ENCODE measurements at regions of chr17 and their contacts with region 1.

Region 1: DNA sequence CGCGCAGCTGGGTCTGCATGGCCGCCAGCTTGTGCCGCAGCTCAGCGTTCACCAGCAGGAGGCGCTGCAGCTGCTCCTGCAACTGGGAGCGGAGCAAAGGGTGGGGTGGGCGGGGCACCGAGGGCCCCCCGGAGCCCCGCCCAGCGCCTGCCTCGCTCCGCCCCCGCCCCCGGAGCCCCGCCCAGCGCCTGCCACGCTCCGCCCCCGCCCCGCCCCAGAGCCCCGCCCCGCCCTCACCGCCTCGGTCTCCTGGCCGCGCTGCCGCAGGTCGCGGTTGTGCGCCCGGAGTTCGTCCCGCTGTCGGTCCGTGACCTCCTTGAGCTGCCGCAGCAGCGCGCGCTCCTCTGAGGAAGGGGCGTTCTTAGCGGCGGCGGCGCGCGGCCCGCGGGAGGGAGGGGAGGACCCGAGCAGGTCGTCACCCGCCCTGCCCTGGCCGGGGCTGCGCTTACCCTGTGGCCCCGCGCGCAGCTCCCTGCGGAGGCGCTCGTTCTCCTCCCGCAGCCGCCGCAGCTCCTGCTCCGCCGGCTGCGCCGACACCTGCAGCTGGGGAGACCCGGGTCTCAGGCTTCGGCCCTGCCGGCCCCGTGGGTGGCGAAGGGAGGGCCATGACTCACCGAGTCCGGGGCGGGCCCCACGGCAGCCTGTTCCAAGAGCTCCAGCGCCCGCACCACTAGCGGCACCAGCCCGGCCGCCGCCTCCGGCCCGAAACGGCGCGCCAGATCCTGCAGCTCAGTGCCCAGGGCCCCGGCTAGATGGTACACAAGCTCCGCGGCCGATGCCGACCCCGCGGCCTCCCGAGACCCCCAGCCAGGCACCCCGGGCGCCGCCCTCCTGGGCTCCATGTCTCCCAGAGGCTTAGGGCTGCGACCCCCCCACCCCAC is 463 bp downstream of the RILP start:
- DNase-seq: peak; percentile 58
- ATAC-seq: peak; percentile 70
- H3K4me3 ChIP-seq: peak overlapping the region; percentile 64; the same call in 1 of the 2 replicates
- H3K27ac ChIP-seq: peak overlapping the region; percentile 18
- H3K4me1 ChIP-seq: peaks cover 31% of the 10 kb centered on the region
- H3K27me3 ChIP-seq: no peaks in the 10 kb centered on the region
- CTCF ChIP-seq: peak; percentile 78 to 99 (median 97)
- EP300 ChIP-seq: no peak
- POLR2A ChIP-seq: peak; percentile 73
- RAD21 ChIP-seq: peak; percentile 57

Region 2: DNA sequence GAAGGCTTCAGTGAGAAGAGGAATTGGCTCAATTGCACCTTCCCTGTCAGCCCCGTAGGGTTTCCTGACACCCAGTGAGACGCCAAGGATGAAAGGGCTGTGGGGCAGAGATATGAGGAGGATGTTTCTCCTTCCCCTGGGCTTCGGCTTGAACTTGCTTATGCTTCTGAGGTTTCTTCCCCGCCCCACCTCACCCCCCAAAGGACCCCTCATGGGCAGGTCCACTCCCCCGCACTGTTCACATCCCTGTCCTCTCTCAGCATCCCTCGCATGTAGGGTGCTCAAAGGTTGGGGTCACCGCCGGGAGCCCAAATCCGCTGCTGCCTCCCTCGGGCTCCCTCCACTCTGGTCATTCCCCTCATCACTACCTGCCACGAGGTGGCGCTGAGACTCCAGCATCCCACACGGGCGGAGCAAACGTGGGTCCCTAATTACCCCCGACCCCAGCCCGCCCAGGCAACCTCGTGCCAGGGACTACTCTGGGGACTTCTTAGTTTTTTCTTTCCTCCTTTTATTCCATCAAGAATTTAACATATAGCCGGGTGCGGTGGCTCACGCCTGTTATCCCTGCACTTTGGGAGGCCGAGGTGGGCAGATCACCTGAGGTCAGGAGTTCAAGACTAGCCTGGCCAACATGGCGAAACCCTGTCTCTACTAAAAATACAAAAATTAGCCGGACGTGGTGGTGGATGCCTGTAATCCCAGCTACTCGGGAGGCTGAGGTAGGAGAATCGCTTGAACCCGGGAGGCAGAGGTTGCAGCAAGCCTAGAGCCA is 373.1 kb before region 1 on chr17:
- CTCF ChIA-PET with region 1: no interaction called
- POLR2A ChIA-PET with region 1: no interaction called
- RAD21 ChIA-PET with region 1: no interaction called
- SMC1A ChIA-PET with region 1: no interaction called
- in situ Hi-C with region 1: no loop called
- intact Hi-C with region 1: loop called (anchors 10 kb)
- DNase-seq: no peak
- ATAC-seq: peak; percentile 95
- H3K4me3 ChIP-seq: no peak overlapping the region
- H3K27ac ChIP-seq: no peak overlapping the region
- H3K4me1 ChIP-seq: no peaks in the 10 kb centered on the region
- H3K27me3 ChIP-seq: no peaks in the 10 kb centered on the region; a peak in 1 of 4 replicates
- CTCF ChIP-seq: peak; percentile 68 to 92 (median 86)
- EP300 ChIP-seq: no peak
- POLR2A ChIP-seq: no peak
- RAD21 ChIP-seq: peak; percentile 88

Region 3: DNA sequence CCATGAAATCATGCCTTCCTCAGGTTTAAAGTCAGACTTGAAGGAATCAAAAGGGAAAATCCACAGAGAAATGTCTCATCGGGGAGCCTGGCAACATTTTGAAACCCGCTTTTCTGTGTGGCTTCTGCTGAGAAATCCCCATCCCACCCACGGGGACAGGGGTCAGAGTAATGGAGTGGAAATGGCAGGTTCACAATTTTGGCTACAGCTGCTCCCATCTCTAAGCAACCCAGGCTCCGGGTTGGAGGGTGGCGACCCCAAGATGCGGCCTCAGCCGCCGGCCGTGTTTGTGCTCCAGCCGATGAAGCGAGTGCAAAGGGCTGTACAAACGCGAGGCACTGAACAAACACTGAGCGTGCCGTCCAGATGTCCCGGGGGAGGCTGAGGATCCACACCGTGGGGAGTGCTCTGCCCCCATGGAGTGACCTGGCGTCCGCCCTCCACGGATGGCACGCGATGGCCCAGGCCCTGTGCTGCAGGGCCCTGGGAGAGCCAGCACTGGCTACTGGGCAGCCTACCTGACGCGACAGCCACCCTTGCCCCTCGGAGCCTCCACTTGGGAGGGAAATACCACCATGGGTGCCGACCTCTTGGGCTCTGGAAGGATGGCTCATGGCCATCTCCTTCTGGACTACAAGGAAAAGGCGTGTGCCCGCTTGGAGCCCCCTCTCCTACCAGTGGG is 42.7 kb before region 1 on chr17:
- CTCF ChIA-PET with region 1: interaction called, 12 read pairs
- POLR2A ChIA-PET with region 1: interaction called, 3 read pairs
- RAD21 ChIA-PET with region 1: interaction called, 4 read pairs
- SMC1A ChIA-PET with region 1: no interaction called
- in situ Hi-C with region 1: no loop called
- intact Hi-C with region 1: no loop called
- DNase-seq: no peak
- ATAC-seq: peak; percentile 55
- H3K4me3 ChIP-seq: no peak overlapping the region
- H3K27ac ChIP-seq: peak overlapping the region; percentile 85
- H3K4me1 ChIP-seq: peaks cover 32% of the 10 kb centered on the region
- H3K27me3 ChIP-seq: no peaks in the 10 kb centered on the region
- CTCF ChIP-seq: no peak
- EP300 ChIP-seq: peak in 1 of 2 experiments; percentile 17; a peak in 1 of 4 replicates
- POLR2A ChIP-seq: peak; percentile 56; the same call in 1 of the 2 replicates
- RAD21 ChIP-seq: no peak

Region 4: GRCh38 chr17:1673041-1673785 is 24.0 kb after region 1 on chr17:
- CTCF ChIA-PET with region 1: interaction called, 11 read pairs
- POLR2A ChIA-PET with region 1: no interaction called
- RAD21 ChIA-PET with region 1: interaction called, 6 read pairs
- SMC1A ChIA-PET with region 1: no interaction called
- in situ Hi-C with region 1: no loop called
- intact Hi-C with region 1: no loop called
- DNase-seq: no peak
- ATAC-seq: no peak
- H3K4me3 ChIP-seq: no peak overlapping the region
- H3K27ac ChIP-seq: no peak overlapping the region
- H3K4me1 ChIP-seq: no peaks in the 10 kb centered on the region
- H3K27me3 ChIP-seq: no peaks in the 10 kb centered on the region
- CTCF ChIP-seq: no peak
- EP300 ChIP-seq: no peak
- POLR2A ChIP-seq: peak; percentile 66
- RAD21 ChIP-seq: no peak

Region 5: DNA sequence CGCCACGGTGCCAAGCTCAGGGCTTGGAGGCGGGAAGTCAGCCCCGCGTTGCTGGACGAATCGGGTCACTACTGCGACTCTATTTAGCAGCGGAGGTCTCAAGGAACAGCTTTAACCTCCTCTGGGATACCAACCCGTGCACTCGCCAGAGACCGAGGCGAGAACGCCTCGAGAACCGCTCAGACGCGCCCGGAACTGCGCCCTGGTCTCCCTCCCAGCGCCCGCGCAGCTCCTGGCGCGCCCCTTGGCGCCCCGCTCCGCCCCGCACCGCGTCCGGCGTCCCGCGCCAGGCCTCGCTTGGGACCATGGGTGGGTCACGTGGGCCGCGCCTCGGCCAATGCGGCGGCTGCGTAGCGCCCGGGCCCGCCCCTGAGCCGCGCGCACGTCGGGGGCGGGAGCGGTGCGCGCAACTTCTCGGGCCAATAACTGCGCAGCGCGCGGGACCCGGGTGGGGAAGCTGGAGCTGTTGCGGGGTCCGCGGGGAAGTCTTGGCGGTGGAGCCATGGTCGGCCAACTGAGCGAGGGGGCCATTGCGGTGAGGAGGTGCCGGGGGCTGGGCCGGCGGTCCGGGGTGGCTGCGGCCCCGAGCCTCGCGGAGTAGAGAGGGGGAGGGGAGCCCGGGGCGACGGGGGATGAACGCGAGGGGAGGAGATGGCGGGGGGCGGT is 180.5 kb after region 1 on chr17 and contains the starts of genes RPA1 and SMYD4:
- CTCF ChIA-PET with region 1: no interaction called
- POLR2A ChIA-PET with region 1: no interaction called
- RAD21 ChIA-PET with region 1: no interaction called
- SMC1A ChIA-PET with region 1: no interaction called
- in situ Hi-C with region 1: no loop called
- intact Hi-C with region 1: no loop called
- DNase-seq: peak; percentile 48
- ATAC-seq: peak; percentile 97
- H3K4me3 ChIP-seq: peak within 1 kb of the TSS; percentile 98
- H3K27ac ChIP-seq: peak within 1 kb of the TSS; percentile 83
- H3K4me1 ChIP-seq: peaks cover 15% of the 10 kb centered on the region
- H3K27me3 ChIP-seq: no peaks in the 10 kb centered on the region
- CTCF ChIP-seq: no peak
- EP300 ChIP-seq: no peak
- POLR2A ChIP-seq: peak; percentile 87
- RAD21 ChIP-seq: no peak
- polyA plus RNA-seq, gene RPA1: 35.9 to 50.6 TPM
- polyA plus RNA-seq, gene SMYD4: 2.1 to 2.6 TPM

Region 6: DNA sequence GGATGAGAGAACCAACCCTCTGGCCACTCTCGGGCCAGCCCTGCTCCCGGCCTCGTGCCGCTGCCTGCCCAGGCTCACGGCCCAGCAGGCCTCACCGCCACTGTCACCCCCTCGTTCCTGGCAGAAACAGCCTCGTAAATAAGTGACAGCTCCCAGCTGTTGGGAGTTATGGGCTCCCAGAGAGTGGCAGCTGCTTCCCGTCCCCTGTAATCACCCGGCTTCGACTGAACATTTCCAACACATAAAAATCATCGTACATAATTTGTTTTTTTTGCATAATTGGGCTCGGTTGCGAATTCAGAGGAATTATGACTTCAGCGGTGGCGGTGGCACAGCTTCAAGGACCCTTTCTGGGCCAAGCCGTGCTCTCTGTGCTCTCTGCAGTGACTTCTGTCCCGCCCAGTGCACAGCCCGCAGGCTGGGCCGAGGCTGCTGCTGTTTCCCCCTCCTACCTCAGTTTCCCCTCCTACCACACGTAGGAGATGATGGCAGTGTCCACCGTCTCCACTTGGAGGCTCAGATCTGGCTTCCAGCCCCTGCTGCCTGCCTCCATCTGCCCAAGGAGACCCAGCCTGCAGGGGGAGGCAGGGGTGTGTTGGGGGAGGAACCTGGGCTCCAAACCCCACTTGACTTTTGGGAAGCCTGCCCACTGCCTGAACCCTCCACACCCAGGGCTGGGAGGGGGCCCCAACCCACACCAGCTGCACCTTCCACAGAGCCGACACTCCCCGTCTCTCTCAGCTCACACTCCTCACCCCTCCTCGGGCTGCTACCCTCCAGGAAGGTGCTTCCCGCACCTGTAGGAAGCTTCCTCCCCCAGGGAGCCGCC is 291.0 kb after region 1 on chr17:
- CTCF ChIA-PET with region 1: no interaction called
- POLR2A ChIA-PET with region 1: no interaction called
- RAD21 ChIA-PET with region 1: no interaction called
- SMC1A ChIA-PET with region 1: no interaction called
- in situ Hi-C with region 1: no loop called
- intact Hi-C with region 1: no loop called
- DNase-seq: no peak
- ATAC-seq: no peak
- H3K4me3 ChIP-seq: no peak overlapping the region
- H3K27ac ChIP-seq: no peak overlapping the region
- H3K4me1 ChIP-seq: no peaks in the 10 kb centered on the region
- H3K27me3 ChIP-seq: no peaks in the 10 kb centered on the region
- CTCF ChIP-seq: no peak
- EP300 ChIP-seq: no peak
- POLR2A ChIP-seq: no peak
- RAD21 ChIP-seq: no peak

Measured in GM12878 (cell line).